ENCODE measurements at regions of chr11 and their contacts with region 1.

Region 1: DNA sequence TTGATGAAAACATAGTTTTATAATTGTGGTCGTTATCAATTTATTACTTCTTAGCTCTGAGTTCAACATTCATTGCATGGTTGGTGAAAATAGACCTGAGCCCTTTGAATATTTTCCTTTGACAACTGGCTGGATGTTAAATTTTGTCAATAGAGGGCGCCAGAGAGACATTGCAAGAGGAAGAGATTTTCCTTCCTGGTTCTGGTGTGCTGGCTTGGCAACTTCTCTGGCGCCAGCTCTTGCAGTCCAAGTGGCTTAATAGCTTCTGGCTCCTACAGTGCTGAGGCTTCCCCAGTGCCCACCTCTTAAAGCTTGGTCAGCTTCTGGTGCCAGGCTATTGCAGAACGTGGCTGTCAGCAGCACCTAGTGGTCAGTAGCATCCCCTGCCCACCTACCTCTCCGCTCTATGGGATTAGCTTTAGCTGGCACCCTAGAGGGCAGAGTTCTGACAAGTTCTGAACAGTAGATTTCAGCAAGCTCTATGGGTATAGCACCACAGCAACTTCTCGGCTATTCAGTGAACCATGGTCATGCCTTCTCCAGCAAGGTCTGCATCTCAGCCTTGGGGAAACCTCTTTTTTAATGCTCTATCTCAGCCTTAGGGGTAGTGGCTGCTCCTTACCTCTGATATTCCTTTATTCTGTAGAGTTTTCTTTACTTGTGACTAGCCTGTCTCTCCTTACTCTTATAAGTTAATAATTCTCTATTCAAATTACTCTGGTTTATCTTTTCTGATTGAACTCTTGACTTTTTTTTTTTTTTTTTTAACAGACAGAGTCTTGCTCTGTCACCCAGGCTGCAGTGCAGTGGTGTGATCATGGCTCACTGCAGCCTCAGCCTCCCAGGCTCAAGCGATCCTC is 59.4 kb downstream of the ACER3 start:
- DNase-seq: peak; percentile 86 to 91
- H3K4me3 ChIP-seq: no peak overlapping the region
- H3K4me3 Mint-ChIP-seq: no peak overlapping the region
- H3K27ac Mint-ChIP-seq: no peak overlapping the region
- H3K4me1 ChIP-seq: peaks cover 32% of the 10 kb centered on the region
- H3K4me1 Mint-ChIP-seq: peaks cover 25% of the 10 kb centered on the region
- H3K27me3 ChIP-seq: no peaks in the 10 kb centered on the region
- H3K27me3 Mint-ChIP-seq: no peaks in the 10 kb centered on the region
- CTCF ChIP-seq: peak; percentile 95 to 98

Region 2: DNA sequence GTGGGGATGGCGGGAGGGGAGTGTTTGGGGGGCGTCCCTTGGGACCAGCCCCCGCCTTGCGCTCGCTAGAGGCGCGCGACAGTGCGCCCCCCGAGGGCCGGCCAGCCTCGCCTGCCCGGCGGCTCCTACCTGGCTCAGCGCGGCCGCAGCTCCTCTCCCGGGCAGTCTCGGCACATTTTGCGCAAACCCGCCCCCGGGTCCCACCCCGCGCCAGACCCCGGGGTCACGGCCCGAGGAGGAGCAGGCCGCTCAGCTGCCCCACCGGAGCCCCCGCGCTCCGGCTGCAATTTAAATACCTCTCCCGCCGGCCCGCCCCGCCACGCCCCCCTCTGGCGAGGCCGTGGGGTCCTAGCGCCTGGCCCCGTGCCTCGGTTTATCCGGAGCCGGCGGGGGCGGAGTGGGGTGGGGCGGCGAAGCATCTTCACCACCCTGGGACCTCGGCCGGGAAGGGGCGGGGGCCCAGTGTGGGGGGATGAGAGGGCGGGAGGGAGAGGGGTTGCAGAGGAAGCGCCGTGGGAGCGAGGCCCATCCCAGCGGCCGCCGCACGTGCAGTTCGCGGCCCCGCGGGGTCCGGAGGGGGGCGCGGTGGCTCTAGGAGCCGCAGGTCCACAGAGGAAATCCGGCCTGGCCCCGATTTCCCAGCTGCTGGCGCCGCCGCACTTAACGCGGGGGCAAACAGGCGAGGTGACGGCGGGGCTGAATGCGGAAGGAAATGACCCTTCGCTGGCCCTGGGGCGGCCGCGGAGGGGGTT is 249.5 kb before region 1 on chr11 and contains the start of gene LRRC32:
- CTCF ChIA-PET with region 1: no interaction called
- POLR2A ChIA-PET with region 1: no interaction called
- intact Hi-C with region 1: no loop called
- DNase-seq: peak in 1 of 2 experiments; percentile 38
- H3K4me3 ChIP-seq: peak within 1 kb of the TSS; percentile 28
- H3K4me3 Mint-ChIP-seq: peak within 1 kb of the TSS; percentile 60
- H3K27ac Mint-ChIP-seq: no peak within 1 kb of the TSS
- H3K4me1 ChIP-seq: peaks cover 9% of the 10 kb centered on the region
- H3K4me1 Mint-ChIP-seq: no peaks in the 10 kb centered on the region
- H3K27me3 ChIP-seq: no peaks in the 10 kb centered on the region
- H3K27me3 Mint-ChIP-seq: peaks cover 3% of the 10 kb centered on the region
- CTCF ChIP-seq: no peak
- total RNA-seq, gene LRRC32: 0.27 and 0.84 TPM in 2 replicates

Region 3: GRCh38 chr11:76721755-76722677 is 198.1 kb before region 1 on chr11:
- CTCF ChIA-PET with region 1: interaction called, 56 read pairs
- POLR2A ChIA-PET with region 1: no interaction called
- intact Hi-C with region 1: no loop called
- DNase-seq: peak; percentile 85 to 91
- H3K4me3 ChIP-seq: no peak overlapping the region
- H3K4me3 Mint-ChIP-seq: no peak overlapping the region
- H3K27ac Mint-ChIP-seq: no peak overlapping the region
- H3K4me1 ChIP-seq: 0 out of 2 replicates have a peak, but pooled peaks cover 7% of the 10 kb centered on the region
- H3K4me1 Mint-ChIP-seq: peaks cover 5% of the 10 kb centered on the region
- H3K27me3 ChIP-seq: no peaks in the 10 kb centered on the region; the same call in 1 of the 2 replicates
- H3K27me3 Mint-ChIP-seq: peaks cover 5% of the 10 kb centered on the region
- CTCF ChIP-seq: peak; percentile 98

Region 4: GRCh38 chr11:76782526-76783293 is 137.4 kb before region 1 on chr11:
- CTCF ChIA-PET with region 1: interaction called, 20 read pairs
- POLR2A ChIA-PET with region 1: no interaction called
- intact Hi-C with region 1: no loop called
- DNase-seq: peak; percentile 98
- H3K4me3 ChIP-seq: peak overlapping the region; percentile 85
- H3K4me3 Mint-ChIP-seq: peak overlapping the region; percentile 79
- H3K27ac Mint-ChIP-seq: peak overlapping the region; percentile 71
- H3K4me1 ChIP-seq: peaks cover 31% of the 10 kb centered on the region
- H3K4me1 Mint-ChIP-seq: peaks cover 46% of the 10 kb centered on the region
- H3K27me3 ChIP-seq: no peaks in the 10 kb centered on the region
- H3K27me3 Mint-ChIP-seq: no peaks in the 10 kb centered on the region
- CTCF ChIP-seq: no peak

Region 5: DNA sequence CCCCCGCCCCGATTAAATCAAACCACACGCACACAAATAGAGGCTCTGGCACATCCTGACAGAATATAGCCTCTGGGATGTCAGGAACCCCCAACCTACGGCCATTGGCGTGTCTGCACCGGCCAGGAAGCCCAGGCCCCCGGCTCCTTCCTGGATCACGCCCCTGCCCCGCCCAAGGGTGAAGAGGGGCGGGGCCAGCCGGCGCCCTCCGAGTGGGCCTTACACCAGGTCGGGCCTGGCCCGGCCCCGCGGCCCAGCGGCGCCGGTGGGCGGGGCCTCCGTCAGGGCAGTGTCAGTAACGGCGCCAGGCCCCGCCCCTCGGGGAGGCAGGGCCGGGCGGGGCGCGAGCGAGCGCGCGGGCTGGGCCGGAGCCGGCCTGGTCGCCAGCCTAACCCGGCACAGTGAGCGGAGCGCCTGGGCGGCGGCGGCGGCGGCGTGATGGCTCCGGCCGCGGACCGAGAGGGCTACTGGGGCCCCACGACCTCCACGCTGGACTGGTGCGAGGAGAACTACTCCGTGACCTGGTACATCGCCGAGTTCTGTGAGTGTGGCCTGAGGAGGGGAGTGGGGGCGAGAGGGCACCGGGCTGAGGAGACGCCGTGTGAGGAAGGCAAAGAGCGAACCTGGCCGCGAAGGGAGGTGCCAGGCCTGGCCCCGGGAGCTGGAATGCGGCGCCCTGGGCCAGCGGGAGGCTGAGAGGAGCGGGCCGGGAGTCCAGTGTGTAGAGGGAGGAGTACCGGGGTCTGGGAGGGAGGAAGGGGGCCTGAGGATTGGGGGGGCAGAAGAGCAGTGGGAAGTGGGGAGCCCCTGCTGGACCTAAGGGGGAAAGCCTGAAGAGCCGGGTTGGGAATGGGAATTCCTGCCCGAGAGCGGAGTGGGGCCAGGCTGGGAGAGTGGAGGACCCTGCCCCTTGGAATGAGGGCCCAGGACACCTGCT is 59.3 kb before region 1 on chr11 and contains the start of gene ACER3:
- CTCF ChIA-PET with region 1: interaction called, 3 read pairs
- POLR2A ChIA-PET with region 1: no interaction called
- intact Hi-C with region 1: loop called (anchors 1 kb)
- DNase-seq: peak; percentile 95 to 99
- H3K4me3 ChIP-seq: peak within 1 kb of the TSS; percentile 73
- H3K4me3 Mint-ChIP-seq: peak within 1 kb of the TSS; percentile 94
- H3K27ac Mint-ChIP-seq: peak within 1 kb of the TSS; percentile 85
- H3K4me1 ChIP-seq: peaks cover 27% of the 10 kb centered on the region
- H3K4me1 Mint-ChIP-seq: peaks cover 35% of the 10 kb centered on the region
- H3K27me3 ChIP-seq: no peaks in the 10 kb centered on the region
- H3K27me3 Mint-ChIP-seq: no peaks in the 10 kb centered on the region
- CTCF ChIP-seq: peak in 1 of 2 experiments; percentile 72
- total RNA-seq, gene ACER3: 37.5 and 40.6 TPM in 2 replicates

Region 6: GRCh38 chr11:76880314-76880713 is 39.8 kb before region 1 on chr11:
- CTCF ChIA-PET with region 1: no interaction called
- POLR2A ChIA-PET with region 1: no interaction called
- intact Hi-C with region 1: no loop called
- DNase-seq: no peak
- H3K4me3 ChIP-seq: no peak overlapping the region
- H3K4me3 Mint-ChIP-seq: no peak overlapping the region
- H3K27ac Mint-ChIP-seq: no peak overlapping the region
- H3K4me1 ChIP-seq: no peaks in the 10 kb centered on the region
- H3K4me1 Mint-ChIP-seq: no peaks in the 10 kb centered on the region
- H3K27me3 ChIP-seq: no peaks in the 10 kb centered on the region
- H3K27me3 Mint-ChIP-seq: no peaks in the 10 kb centered on the region
- CTCF ChIP-seq: no peak

Region 7: GRCh38 chr11:76962583-76963416 is 42.7 kb after region 1 on chr11:
- CTCF ChIA-PET with region 1: interaction called, 42 read pairs
- POLR2A ChIA-PET with region 1: no interaction called
- intact Hi-C with region 1: loop called (anchors 1 kb)
- DNase-seq: peak; percentile 89 to 92
- H3K4me3 ChIP-seq: no peak overlapping the region
- H3K4me3 Mint-ChIP-seq: peak overlapping the region; percentile 53
- H3K27ac Mint-ChIP-seq: peak overlapping the region; percentile 92
- H3K4me1 ChIP-seq: peaks cover 22% of the 10 kb centered on the region
- H3K4me1 Mint-ChIP-seq: peaks cover 30% of the 10 kb centered on the region
- H3K27me3 ChIP-seq: no peaks in the 10 kb centered on the region
- H3K27me3 Mint-ChIP-seq: no peaks in the 10 kb centered on the region
- CTCF ChIP-seq: no peak